Ovary (tissue), 10 donors: ENCODE measurements at regions of chr7 and their contacts with region 1.

Region 1: DNA sequence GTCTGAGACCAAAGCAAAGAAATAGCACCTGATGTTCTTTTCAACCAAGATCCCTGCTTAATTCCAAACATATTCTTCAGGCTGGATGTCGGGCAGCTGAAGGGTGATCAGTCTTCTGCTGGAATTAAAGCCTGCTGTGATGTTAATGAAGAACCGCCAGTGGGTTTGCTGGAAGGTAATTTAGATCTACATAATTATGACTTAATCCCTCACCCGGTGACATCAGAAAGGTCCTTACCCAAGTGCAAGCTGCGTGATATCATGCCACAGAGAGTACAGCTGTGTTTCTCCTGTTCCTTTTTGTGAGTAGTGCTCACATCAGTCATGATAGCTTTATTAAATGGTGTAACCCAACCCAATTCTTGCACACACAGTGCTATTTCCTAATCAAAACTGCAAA is 29.1 kb upstream of the LRGUK start:
- DNase-seq: no peak
- H3K4me3 ChIP-seq: no peak overlapping the region
- H3K27ac ChIP-seq: no peak overlapping the region
- H3K4me1 ChIP-seq: no peaks in the 10 kb centered on the region
- H3K27me3 ChIP-seq: no peaks in the 10 kb centered on the region
- CTCF ChIP-seq: no peak
- EP300 ChIP-seq: no peak
- POLR2A ChIP-seq: no peak

Region 2: GRCh38 chr7:133837224-133837623 is 260.8 kb before region 1 on chr7:
- intact Hi-C with region 1: no loop called
- DNase-seq: no peak
- H3K4me3 ChIP-seq: no peak overlapping the region
- H3K27ac ChIP-seq: no peak overlapping the region
- H3K4me1 ChIP-seq: no peaks in the 10 kb centered on the region
- H3K27me3 ChIP-seq: no peaks in the 10 kb centered on the region
- CTCF ChIP-seq: no peak
- EP300 ChIP-seq: no peak
- POLR2A ChIP-seq: no peak

Region 3: DNA sequence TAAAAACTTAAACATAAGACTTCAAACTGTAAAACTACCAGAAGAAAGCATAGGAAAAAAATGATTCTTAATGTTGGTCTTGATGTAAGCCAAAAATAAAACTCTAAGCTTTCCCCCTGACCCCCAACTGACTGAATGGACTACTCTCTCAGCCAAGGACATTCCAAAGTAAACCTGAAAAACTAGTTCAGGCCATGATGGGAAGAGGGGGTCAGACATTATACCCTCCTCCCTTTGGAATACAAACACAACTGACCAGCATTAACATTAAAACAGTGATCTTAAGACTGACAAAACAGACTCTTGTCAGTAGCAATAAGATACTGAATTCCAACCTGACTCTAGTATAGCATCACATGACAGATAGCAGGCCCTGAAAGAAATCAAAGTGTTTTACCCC is 15.6 kb after region 1 on chr7:
- intact Hi-C with region 1: loop called in 1 of 4 experiments (anchors 2 kb)
- DNase-seq: no peak
- H3K4me3 ChIP-seq: no peak overlapping the region
- H3K27ac ChIP-seq: no peak overlapping the region
- H3K4me1 ChIP-seq: no peaks in the 10 kb centered on the region
- H3K27me3 ChIP-seq: no peaks in the 10 kb centered on the region
- CTCF ChIP-seq: no peak
- EP300 ChIP-seq: no peak
- POLR2A ChIP-seq: no peak